Ovary (tissue), 10 donors: ENCODE measurements at regions of chr16 and their contacts with region 1.

Region 1: DNA sequence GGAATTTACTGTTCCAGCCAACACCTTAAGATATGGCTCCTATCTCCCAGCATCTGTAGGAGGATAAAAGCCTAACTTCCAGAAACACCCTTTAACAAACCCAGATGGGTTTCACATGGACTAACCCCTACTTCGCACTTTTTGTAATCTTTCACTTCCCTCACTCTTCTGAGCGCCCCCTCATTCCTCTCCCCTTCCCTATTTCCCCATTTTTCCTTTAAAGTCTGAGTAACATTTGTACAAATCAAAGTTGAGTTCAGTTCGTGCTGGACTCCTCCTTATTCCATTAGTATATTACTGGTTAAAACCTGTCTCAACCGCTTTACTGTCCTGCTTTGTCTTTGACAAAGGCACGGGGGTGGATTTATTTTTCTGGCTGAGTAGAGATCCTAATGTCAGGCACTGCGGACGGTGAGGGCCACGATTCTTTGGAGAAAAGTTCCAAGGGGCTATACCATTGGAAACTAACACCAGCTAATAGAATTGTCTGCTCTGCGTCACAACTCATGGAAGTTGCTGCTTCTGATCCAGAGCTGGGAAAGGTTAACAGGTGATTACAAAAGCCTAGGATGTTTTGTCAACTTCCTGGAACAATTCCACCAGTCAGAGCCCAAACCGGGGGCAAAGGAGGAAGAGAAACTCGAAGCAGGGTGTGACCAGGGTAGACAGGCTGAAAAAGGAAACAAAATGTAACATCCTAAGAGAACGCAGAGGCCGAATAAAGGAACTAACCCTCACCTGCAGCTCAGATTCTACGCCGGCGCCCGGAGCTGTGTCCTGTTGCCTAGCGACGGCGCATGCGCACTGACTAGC is 12.5 kb downstream of the TAT start:
- DNase-seq: peak in 2 of 5 donors; percentile 17 to 96
- H3K4me3 ChIP-seq: peak overlapping the region; percentile 36
- H3K27ac ChIP-seq: no peak overlapping the region
- H3K4me1 ChIP-seq: peaks cover 5% of the 10 kb centered on the region
- H3K27me3 ChIP-seq: no peaks in the 10 kb centered on the region
- CTCF ChIP-seq: no peak
- EP300 ChIP-seq: no peak
- POLR2A ChIP-seq: no peak

Region 2: DNA sequence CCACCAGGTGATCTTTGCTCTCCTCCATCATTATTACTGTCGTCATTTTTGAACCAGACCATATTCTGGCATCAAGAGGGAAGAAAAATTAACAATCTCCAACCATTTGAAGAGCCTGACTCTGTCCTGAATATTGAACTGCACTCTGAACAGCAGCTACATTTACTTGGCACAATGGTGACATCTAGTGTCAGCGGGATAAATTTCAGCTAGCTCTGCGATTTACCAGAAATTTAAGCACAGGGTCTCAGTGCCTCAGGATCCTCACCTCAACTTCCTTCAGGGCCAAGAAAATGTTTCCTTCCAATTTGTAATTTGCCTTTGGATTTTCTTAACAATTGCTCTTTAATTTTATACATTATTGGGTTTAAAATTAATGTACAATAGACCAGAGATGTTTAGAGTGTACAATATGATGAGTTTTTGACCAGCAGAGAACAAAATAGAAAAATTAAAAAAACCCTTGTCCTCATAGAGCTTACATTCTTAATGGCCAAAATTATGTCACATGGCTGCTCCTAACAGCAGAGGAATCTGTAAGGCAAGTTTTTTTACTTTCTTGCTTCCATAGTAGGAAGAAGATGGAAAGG is 64.5 kb before region 1 on chr16:
- intact Hi-C with region 1: no loop called
- DNase-seq: peak in 1 of 5 donors; percentile 31
- H3K4me3 ChIP-seq: no peak overlapping the region
- H3K27ac ChIP-seq: no peak overlapping the region
- H3K4me1 ChIP-seq: no peaks in the 10 kb centered on the region
- H3K27me3 ChIP-seq: no peaks in the 10 kb centered on the region
- CTCF ChIP-seq: peak in 2 of 3 donors; percentile 42 to 45
- EP300 ChIP-seq: no peak
- POLR2A ChIP-seq: no peak

Region 3: GRCh38 chr16:71552698-71553451 is 11.5 kb before region 1 on chr16:
- intact Hi-C with region 1: loop called in 1 of 4 experiments (anchors 1 kb)
- DNase-seq: no peak
- H3K4me3 ChIP-seq: no peak overlapping the region
- H3K27ac ChIP-seq: no peak overlapping the region
- H3K4me1 ChIP-seq: no peaks in the 10 kb centered on the region
- H3K27me3 ChIP-seq: no peaks in the 10 kb centered on the region
- CTCF ChIP-seq: no peak
- EP300 ChIP-seq: no peak
- POLR2A ChIP-seq: no peak